Activated B cell treated with CpG ODN at 0.5 μM for 24 hours (primary cell): ENCODE measurements at regions of chr6 and their contacts with region 1.

Region 1: GRCh38 chr6:7107578-7108195 is at the start of gene RREB1:
- DNase-seq: peak; percentile 61
- ATAC-seq: peak; percentile 64
- H3K4me3 Mint-ChIP-seq: peak within 1 kb of the TSS; percentile 95
- H3K27ac Mint-ChIP-seq: peak within 1 kb of the TSS; percentile 94
- H3K4me1 Mint-ChIP-seq: peaks cover 38% of the 10 kb centered on the region
- H3K27me3 Mint-ChIP-seq: no peaks in the 10 kb centered on the region
- CTCF ChIP-seq: no peak
- total RNA-seq, gene RREB1: 62.2 and 67.7 TPM in 2 replicates

Region 2: GRCh38 chr6:6788394-6789020 is 319.2 kb before region 1 on chr6:
- CTCF ChIA-PET with region 1: no interaction called
- POLR2A ChIA-PET with region 1: no interaction called
- intact Hi-C with region 1: loop called (anchors 1 kb)
- DNase-seq: no peak
- ATAC-seq: peak; percentile 90
- H3K4me3 Mint-ChIP-seq: no peak overlapping the region
- H3K27ac Mint-ChIP-seq: no peak overlapping the region
- H3K4me1 Mint-ChIP-seq: no peaks in the 10 kb centered on the region
- H3K27me3 Mint-ChIP-seq: no peaks in the 10 kb centered on the region
- CTCF ChIP-seq: no peak

Region 3: DNA sequence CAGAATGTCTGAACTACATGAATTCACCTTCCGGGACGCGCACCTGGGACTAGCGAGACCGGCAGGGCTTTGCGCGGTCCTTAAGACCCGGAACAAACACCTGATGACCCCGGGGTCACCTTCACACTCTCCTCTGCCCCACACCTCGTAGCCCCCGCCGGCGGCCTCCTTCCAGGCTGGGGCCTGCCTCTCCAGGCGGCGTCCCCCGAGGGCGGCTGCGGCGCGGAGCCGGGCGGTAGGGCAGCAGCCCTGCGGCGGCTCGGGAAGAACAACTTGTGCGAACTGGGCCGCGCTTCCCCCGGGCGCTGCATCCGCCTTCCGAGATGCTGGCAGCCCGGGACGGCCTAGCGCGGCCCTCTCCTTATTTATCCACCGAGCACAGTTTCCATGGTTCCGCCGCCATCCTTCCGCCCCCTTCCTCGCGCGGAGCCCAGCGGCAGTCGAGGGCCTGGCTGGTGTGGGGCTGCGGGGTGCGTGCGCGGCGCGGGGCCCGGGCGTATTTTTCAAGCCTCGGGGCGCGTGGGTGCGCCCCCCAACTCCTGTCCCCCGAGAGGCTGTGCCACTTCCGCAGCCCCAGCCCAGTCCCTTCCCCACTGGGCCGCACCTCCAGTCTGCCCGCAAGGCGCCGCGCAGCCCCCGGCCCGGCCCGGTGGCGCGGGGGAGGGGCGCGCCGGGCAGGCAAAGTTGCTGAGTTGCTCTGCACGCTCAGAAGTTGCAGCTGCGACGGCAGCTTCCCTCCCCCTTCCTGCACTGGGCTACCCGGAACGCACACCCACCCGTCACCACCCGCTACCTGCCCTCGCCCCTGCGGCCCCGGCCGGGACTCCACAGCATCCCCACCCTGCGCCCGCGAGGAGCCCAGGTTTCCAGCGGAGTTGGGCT is 56.2 kb before region 1 on chr6:
- CTCF ChIA-PET with region 1: interaction called, 4 read pairs
- POLR2A ChIA-PET with region 1: interaction called, 18 read pairs
- intact Hi-C with region 1: loop called (anchors 2 kb)
- DNase-seq: peak; percentile 61
- ATAC-seq: peak; percentile 86
- H3K4me3 Mint-ChIP-seq: peak overlapping the region; percentile 76
- H3K27ac Mint-ChIP-seq: peak overlapping the region; percentile 56
- H3K4me1 Mint-ChIP-seq: peaks cover 38% of the 10 kb centered on the region
- H3K27me3 Mint-ChIP-seq: no peaks in the 10 kb centered on the region
- CTCF ChIP-seq: no peak

Region 4: GRCh38 chr6:7086488-7086887 is 21.2 kb before region 1 on chr6:
- CTCF ChIA-PET with region 1: interaction called, 3 read pairs
- POLR2A ChIA-PET with region 1: interaction called, 21 read pairs
- intact Hi-C with region 1: loop called (anchors 1 kb)
- DNase-seq: peak; percentile 35
- ATAC-seq: peak; percentile 87
- H3K4me3 Mint-ChIP-seq: peak overlapping the region; percentile 83
- H3K27ac Mint-ChIP-seq: peak overlapping the region; percentile 89
- H3K4me1 Mint-ChIP-seq: peaks cover 30% of the 10 kb centered on the region
- H3K27me3 Mint-ChIP-seq: no peaks in the 10 kb centered on the region
- CTCF ChIP-seq: no peak

Region 5: DNA sequence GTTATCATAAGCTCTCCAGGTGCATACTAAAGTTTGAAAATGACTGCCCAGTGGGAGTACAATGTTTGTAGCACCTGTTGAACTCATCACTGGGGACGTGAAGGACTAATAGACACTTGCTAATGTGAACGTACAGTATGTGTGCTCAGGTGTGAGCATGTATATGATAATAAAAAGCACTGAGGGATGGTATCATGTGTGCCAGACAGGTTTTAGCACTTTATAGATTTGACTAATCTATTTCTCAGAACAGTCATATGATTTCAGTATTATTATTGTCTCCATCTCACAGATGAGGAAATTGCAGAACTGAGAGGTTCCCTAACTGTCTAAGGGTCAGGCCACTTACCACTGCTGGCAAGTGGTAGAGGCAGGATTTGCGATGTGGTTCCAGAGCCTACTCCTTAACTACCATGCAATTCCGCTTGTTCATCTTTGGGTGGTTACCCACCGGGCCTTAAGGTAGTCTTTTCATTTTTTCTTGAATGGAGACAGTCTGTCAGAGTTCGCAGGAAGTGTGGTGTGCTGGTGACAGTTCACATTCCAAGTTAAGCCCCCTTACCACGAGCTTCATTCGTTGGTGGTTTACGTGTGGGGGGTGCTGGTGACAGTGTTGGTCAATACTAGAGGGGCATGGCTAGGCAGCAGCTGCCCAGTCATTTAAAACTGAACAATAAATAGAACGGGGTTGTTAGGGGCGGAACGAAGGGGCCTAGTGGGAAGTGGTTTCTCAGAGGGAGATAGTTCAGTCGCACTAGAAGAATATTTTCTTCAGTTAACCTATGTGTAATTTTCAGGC is 46.9 kb after region 1 on chr6:
- CTCF ChIA-PET with region 1: no interaction called
- POLR2A ChIA-PET with region 1: interaction called, 27 read pairs
- intact Hi-C with region 1: loop called (anchors 1 kb)
- DNase-seq: no peak
- ATAC-seq: peak; percentile 84
- H3K4me3 Mint-ChIP-seq: peak overlapping the region; percentile 74
- H3K27ac Mint-ChIP-seq: peak overlapping the region; percentile 92
- H3K4me1 Mint-ChIP-seq: peaks cover 89% of the 10 kb centered on the region
- H3K27me3 Mint-ChIP-seq: no peaks in the 10 kb centered on the region
- CTCF ChIP-seq: no peak

Region 6: GRCh38 chr6:7201688-7202541 is 94.2 kb after region 1 on chr6:
- CTCF ChIA-PET with region 1: no interaction called
- POLR2A ChIA-PET with region 1: interaction called, 6 read pairs
- intact Hi-C with region 1: loop called (anchors 1 kb)
- DNase-seq: peak; percentile 65
- ATAC-seq: peak; percentile 94
- H3K4me3 Mint-ChIP-seq: peak overlapping the region; percentile 50
- H3K27ac Mint-ChIP-seq: peak overlapping the region; percentile 74
- H3K4me1 Mint-ChIP-seq: peaks cover 56% of the 10 kb centered on the region
- H3K27me3 Mint-ChIP-seq: no peaks in the 10 kb centered on the region
- CTCF ChIP-seq: no peak